Common myeloid progenitor, CD34-positive (primary cell): ENCODE measurements at regions of chr1 and their contacts with region 1.

Region 1: DNA sequence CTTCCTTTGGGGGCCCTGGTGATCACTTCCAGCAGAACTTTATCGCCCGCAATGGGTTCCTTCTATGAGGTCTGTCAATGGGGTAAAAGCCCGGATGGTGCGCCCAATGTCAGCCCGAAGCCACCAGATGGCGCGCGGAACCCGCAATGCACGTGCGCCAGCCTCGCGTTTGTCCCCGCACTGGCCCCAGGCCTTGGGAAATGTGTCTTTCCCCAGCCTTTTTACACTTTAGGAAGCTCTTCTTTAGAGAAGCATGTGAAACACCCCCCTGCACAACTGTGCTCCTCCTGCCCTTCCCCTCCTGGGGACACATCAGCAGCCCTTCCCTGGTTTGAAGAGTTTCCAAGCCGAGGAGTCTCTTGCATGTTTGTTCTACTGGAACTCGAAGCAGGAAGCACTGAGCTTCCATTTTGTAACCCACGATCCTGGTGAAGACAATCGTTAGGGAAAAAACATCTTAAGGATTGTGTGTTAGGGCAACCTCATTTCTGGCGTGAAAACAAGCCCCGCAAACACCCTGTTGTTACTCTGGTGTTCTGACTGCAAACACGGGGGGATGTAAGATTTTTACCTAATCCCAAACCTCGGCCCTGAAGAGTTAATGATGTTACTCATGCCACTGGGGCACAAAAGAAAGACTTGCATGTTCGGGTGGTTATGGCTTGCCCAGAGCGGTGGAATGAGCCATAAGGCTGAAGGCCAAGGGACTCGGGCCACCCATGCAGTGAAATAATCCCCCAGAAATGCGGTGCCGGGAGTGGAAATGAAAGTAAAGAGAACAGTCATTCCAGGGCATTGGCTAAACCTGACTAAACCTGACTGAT is 20.4 kb upstream of the TARBP1 start:
- DNase-seq: peak; percentile 79 to 84 (median 80)
- H3K4me3 ChIP-seq: no peak overlapping the region
- H3K27ac ChIP-seq: peak overlapping the region in 1 of 2 experiments; percentile 14
- H3K4me1 ChIP-seq: peaks cover 13 to 35% (median 26%) of the 10 kb centered on the region in 4 experiments
- H3K27me3 ChIP-seq: no peaks in the 10 kb centered on the region

Region 2: GRCh38 chr1:234486498-234487448 is 12.6 kb before region 1 on chr1:
- CTCF ChIA-PET with region 1: interaction called, 22 read pairs
- POLR2A ChIA-PET with region 1: no interaction called
- DNase-seq: peak; percentile 75 to 88 (median 83)
- H3K4me3 ChIP-seq: no peak overlapping the region
- H3K27ac ChIP-seq: no peak overlapping the region
- H3K4me1 ChIP-seq: peaks cover 11 to 30% (median 25%) of the 10 kb centered on the region in 4 experiments
- H3K27me3 ChIP-seq: no peaks in the 10 kb centered on the region

Region 3: GRCh38 chr1:234509452-234510328 is 10.4 kb after region 1 on chr1:
- CTCF ChIA-PET with region 1: interaction called, 21 read pairs
- POLR2A ChIA-PET with region 1: no interaction called
- DNase-seq: no peak
- H3K4me3 ChIP-seq: no peak overlapping the region
- H3K27ac ChIP-seq: no peak overlapping the region
- H3K4me1 ChIP-seq: peaks cover 0 to 43% (median 10%) of the 10 kb centered on the region in 4 experiments
- H3K27me3 ChIP-seq: no peaks in the 10 kb centered on the region

Region 4: GRCh38 chr1:234599617-234600417 is 100.5 kb after region 1 on chr1:
- CTCF ChIA-PET with region 1: interaction called, 15 read pairs
- POLR2A ChIA-PET with region 1: interaction called, 3 read pairs
- DNase-seq: peak; percentile 86 to 94 (median 91)
- H3K4me3 ChIP-seq: peak overlapping the region in 6 of 7 experiments; percentile 35 to 72 (median 60)
- H3K27ac ChIP-seq: peak overlapping the region; percentile 20 to 79
- H3K4me1 ChIP-seq: peaks cover 49 to 64% (median 56%) of the 10 kb centered on the region in 4 experiments
- H3K27me3 ChIP-seq: no peaks in the 10 kb centered on the region

Region 5: DNA sequence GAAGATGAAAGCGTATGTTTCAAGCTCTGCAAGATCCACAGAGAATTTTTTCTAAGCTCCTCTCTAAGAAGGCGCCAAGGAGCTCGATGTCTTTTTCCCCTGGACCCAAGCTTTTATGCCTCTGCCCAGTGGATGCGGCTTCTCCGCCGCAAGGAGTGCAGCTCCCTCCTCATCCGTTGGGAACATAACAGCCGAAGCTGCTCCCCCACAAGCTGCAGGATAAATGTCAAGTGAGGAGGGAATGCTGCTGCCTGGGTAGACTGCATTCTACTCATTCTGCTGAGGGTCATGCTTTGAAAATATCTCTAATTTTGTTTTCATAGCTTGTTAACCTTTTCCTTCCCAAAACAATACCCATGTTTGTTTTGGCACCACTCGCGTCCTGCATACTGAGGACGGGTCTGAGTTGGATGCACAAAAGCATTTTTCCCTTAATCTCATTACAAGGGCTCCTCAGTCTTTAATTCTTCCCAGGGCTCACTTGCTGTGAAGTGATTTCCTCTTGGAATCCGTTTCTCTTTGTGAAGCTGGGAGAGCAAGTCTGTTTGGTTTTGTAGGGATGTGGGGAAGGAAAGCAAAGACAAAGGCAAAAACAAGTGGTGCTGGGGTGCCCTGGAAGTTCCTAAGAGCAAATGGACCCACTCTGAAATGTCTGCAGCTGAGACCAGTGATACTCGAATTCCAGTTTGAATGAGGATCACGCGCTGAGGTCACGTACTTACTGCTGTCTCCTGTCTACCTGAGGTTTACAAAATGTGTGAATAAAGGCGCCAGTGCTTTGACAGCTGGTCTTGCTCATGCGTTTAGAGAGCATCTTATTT is 244.7 kb after region 1 on chr1:
- CTCF ChIA-PET with region 1: no interaction called
- POLR2A ChIA-PET with region 1: no interaction called
- DNase-seq: no peak
- H3K4me3 ChIP-seq: no peak overlapping the region
- H3K27ac ChIP-seq: no peak overlapping the region
- H3K4me1 ChIP-seq: peaks cover 0 to 11% (median 9%) of the 10 kb centered on the region in 4 experiments
- H3K27me3 ChIP-seq: no peaks in the 10 kb centered on the region

Region 6: DNA sequence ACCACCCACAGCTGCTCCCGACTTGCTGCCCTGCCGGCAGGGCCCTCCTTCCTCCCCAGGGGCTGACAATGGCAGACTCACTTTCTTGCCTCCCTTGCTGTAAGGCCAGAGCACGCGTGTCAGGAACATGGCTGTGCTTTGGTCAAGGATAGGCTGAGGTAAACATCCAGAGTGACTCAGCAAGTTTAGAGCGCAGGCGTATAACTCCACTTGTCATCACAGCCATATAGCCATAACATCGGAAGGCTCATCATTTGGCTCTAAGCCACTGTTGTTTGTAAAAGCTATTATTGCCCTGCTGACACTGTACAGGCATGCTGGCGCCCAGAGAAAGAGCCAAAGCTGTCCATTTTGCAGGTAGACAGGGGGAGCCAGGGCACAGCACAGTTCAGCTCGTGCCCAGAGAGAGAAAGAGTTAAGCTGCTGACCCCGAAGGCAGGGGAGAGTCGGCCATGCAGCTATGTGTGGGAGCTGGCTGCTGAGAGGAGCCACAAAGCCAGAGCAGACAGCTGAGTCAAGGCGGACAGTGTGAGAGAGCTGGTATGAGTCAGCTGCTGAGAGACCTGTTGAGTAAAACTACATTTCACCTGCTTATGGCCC is 1089.7 kb after region 1 on chr1:
- CTCF ChIA-PET with region 1: no interaction called
- POLR2A ChIA-PET with region 1: no interaction called
- DNase-seq: peak in 2 of 3 donors; percentile 33 to 53
- H3K4me3 ChIP-seq: no peak overlapping the region
- H3K27ac ChIP-seq: no peak overlapping the region
- H3K4me1 ChIP-seq: peaks cover 0 to 5% (median 0%) of the 10 kb centered on the region in 4 experiments
- H3K27me3 ChIP-seq: peaks cover 0 to 33% (median 1%) of the 10 kb centered on the region in 5 experiments